GM13976 (cell line): ENCODE measurements at regions of chr13 and their contacts with region 1.

Region 1: GRCh38 chr13:107211073-107211472 is 643.1 kb upstream of the ARGLU1 start:
- DNase-seq: peak; percentile 46
- CTCF ChIP-seq: peak; percentile 91

Region 2: GRCh38 chr13:106690779-106691178 is 520.3 kb before region 1 on chr13:
- in situ Hi-C with region 1: no loop called
- DNase-seq: no peak
- CTCF ChIP-seq: no peak

Region 3: GRCh38 chr13:107493266-107493665 is 282.2 kb after region 1 on chr13:
- in situ Hi-C with region 1: no loop called
- DNase-seq: no peak
- CTCF ChIP-seq: no peak

Region 4: GRCh38 chr13:107563099-107563925 is 352.2 kb after region 1 on chr13:
- in situ Hi-C with region 1: no loop called
- DNase-seq: no peak
- CTCF ChIP-seq: no peak

Region 5: GRCh38 chr13:108155185-108156106 is 944.4 kb after region 1 on chr13:
- in situ Hi-C with region 1: loop called (anchors 25 kb)
- DNase-seq: peak; percentile 36
- CTCF ChIP-seq: peak; percentile 69